HEK293 (cell line): ENCODE measurements at regions of chr5 and their contacts with region 1.

Region 1: DNA sequence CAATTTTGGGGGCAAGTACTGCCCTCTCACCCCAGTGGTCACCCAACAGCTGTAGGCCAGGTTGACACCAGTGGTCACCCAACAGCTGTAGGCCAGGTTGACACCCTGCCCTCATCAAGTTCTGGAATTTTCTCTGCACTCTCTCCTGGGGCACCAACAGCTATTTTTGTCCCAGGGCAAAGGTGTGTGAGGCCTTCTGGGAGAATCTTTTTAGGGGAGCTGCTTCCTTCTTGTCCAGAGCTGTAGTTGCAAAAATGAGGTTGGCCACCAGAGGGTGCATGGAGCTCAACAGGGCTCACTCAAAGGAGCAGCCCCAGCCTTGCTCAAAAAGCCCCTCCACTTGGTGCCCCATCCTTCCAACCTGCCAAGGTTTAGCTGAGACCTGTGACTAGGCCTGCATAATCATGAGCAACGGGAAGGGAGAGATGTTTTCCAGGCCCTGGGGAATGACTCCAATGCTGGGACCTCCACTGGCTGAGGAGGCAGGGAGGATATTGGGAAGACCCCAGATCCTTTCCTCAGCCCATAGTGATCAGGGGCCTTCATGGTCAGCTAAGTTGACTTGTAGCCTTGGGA is 10.6 kb upstream of the P4HA2 start:
- H3K4me3 ChIP-seq: no peak overlapping the region
- H3K27ac ChIP-seq: no peak overlapping the region
- H3K4me1 ChIP-seq: no peaks in the 10 kb centered on the region
- CTCF ChIP-seq: peak; percentile 52; the same call in 1 of the 2 replicates

Region 2: DNA sequence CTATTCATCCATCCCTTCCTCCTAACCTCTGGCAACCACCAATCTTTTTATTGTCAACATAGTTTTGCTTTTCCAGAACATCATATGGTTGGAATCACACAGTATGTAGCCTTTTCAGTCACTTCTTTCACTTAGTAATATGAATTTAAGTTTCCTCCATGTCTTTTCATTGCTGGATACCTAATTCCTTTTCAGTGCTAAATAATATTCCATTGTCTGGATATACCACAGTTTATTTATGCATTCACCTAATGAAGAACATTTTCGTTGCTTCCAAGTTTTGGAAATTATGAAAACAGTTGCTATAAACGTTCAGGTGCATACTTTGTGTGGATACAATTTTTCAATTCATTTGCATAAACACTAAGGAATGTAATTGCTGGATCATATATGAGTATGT is 370.7 kb before region 1 on chr5:
- CTCF ChIA-PET with region 1: no interaction called
- POLR2A ChIA-PET with region 1: no interaction called
- H3K4me3 ChIP-seq: no peak overlapping the region
- H3K27ac ChIP-seq: no peak overlapping the region
- H3K4me1 ChIP-seq: no peaks in the 10 kb centered on the region
- CTCF ChIP-seq: no peak

Region 3: DNA sequence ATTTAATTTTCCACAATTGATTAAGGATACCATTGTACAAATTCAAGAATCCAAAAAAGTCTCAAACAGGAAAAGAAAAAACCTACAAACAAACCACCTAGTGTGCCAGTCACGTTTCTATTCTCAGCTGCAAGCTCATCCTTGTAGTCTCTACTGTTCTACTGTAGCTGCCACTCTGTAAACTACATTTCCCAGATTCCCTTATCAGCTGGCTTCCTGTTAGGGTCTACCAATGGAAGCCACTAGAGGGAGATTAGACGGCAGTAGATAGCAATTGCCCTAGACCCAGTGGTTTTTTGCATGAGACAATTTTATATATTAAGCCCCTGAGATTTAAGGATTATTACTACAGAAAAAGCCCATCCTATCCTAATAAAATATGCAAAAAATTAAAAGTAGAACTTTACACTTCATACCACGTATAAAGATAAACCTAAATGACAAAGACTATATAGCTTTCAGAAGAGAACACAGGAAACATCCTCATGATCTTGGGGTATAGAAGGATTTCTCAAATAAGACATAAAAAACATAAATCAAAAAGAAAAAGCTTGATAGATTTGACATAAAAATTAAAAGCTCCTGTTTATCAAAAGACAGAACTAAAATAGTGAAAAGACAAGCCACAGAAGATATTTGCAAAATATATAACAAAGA is 48.0 kb before region 1 on chr5:
- CTCF ChIA-PET with region 1: interaction called, 22 read pairs
- POLR2A ChIA-PET with region 1: no interaction called
- H3K4me3 ChIP-seq: no peak overlapping the region
- H3K27ac ChIP-seq: no peak overlapping the region
- H3K4me1 ChIP-seq: no peaks in the 10 kb centered on the region
- CTCF ChIP-seq: peak; percentile 74

Region 4: GRCh38 chr5:132227485-132228240 is 10.6 kb before region 1 on chr5 and contains the start of gene P4HA2:
- CTCF ChIA-PET with region 1: interaction called, 25 read pairs
- POLR2A ChIA-PET with region 1: interaction called, 9 read pairs
- H3K4me3 ChIP-seq: peak within 1 kb of the TSS; percentile 58
- H3K27ac ChIP-seq: peak within 1 kb of the TSS; percentile 57; the same call in 1 of the 2 replicates
- H3K4me1 ChIP-seq: peaks cover 4% of the 10 kb centered on the region
- CTCF ChIP-seq: no peak; the same call in none of the 2 replicates

Region 5: GRCh38 chr5:132272311-132273210 is 34.3 kb after region 1 on chr5:
- CTCF ChIA-PET with region 1: interaction called, 24 read pairs
- POLR2A ChIA-PET with region 1: no interaction called
- H3K4me3 ChIP-seq: no peak overlapping the region
- H3K27ac ChIP-seq: no peak overlapping the region
- H3K4me1 ChIP-seq: no peaks in the 10 kb centered on the region
- CTCF ChIP-seq: peak; percentile 26; the same call in 1 of the 2 replicates

Region 6: GRCh38 chr5:132410451-132411381 is 172.5 kb after region 1 on chr5:
- CTCF ChIA-PET with region 1: interaction called, 10 read pairs
- POLR2A ChIA-PET with region 1: no interaction called
- H3K4me3 ChIP-seq: peak overlapping the region; percentile 54
- H3K27ac ChIP-seq: peak overlapping the region; percentile 93
- H3K4me1 ChIP-seq: peaks cover 4% of the 10 kb centered on the region; the same call in 1 of the 2 replicates
- CTCF ChIP-seq: peak; percentile 55; the same call in 1 of the 2 replicates